Cardiac septum (tissue), 1 donor: ENCODE measurements at regions of chr22 and their contacts with region 1.

Region 1: GRCh38 chr22:46563381-46564083 is 26.1 kb upstream of the CELSR1 start:
- DNase-seq: peak; percentile 90

Region 2: GRCh38 chr22:48489551-48490499 is 1926.3 kb after region 1 on chr22:
- intact Hi-C with region 1: loop called (anchors 10 kb)
- DNase-seq: peak; percentile 51